ENCODE measurements at regions of chr17 and their contacts with region 1.

Region 1: GRCh38 chr17:60630352-60630751 is 30.4 kb downstream of the PPM1D start:
- DNase-seq: peak; percentile 32 to 63 (median 52)
- H3K4me3 ChIP-seq: no peak overlapping the region
- H3K27ac ChIP-seq: peak overlapping the region in 1 of 2 donors; percentile 34
- H3K4me1 ChIP-seq: peaks cover 6% of the 10 kb centered on the region
- H3K27me3 ChIP-seq: no peaks in the 10 kb centered on the region
- CTCF ChIP-seq: no peak
- EP300 ChIP-seq: no peak
- POLR2A ChIP-seq: no peak

Region 2: GRCh38 chr17:60577147-60577915 is 53.0 kb before region 1 on chr17:
- intact Hi-C with region 1: loop called in 3 of 4 experiments (anchors 10 kb)
- DNase-seq: peak in 3 of 5 donors; percentile 50 to 63 (median 53)
- H3K4me3 ChIP-seq: peak overlapping the region; percentile 32
- H3K27ac ChIP-seq: peak overlapping the region in 1 of 2 donors; percentile 63
- H3K4me1 ChIP-seq: peaks cover 13% of the 10 kb centered on the region
- H3K27me3 ChIP-seq: no peaks in the 10 kb centered on the region
- CTCF ChIP-seq: peak in 1 of 3 donors; percentile 18
- EP300 ChIP-seq: no peak
- POLR2A ChIP-seq: no peak

Region 3: DNA sequence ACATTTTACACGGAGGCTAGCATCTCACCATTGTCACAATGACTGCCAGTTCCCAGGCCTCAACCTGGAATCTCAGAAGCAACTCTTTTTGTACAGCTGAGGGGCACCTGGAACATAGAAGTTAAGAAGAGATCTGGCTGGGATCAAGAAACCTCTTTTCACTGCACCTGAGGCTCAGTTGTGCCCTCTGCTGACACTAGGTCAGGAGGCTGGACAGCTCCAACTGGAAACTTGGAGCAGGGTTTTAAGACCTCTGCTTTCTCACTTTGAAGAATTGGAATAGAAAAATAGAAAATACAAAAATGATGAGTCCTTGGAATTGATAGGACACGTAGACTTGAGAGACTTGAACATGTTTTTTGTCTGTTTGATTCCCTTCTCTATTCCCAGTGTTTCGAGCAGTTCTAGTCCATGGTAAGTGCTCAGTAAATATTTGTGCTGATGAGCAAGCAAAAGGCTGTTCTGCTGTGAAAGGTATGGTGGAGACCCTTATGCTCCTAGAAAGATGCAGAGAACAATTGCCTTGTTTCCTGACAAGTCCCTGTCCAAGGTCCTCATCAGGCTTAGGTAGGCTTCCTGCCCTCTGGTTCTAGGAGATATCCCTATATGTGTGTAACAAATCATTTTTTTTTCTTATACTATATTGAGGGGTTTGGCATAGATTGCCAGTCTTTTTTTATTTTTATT is 43.9 kb before region 1 on chr17:
- intact Hi-C with region 1: loop called in 1 of 4 experiments (anchors 10 kb)
- DNase-seq: no peak
- H3K4me3 ChIP-seq: no peak overlapping the region
- H3K27ac ChIP-seq: no peak overlapping the region
- H3K4me1 ChIP-seq: peaks cover 4% of the 10 kb centered on the region
- H3K27me3 ChIP-seq: no peaks in the 10 kb centered on the region
- CTCF ChIP-seq: no peak
- EP300 ChIP-seq: no peak
- POLR2A ChIP-seq: no peak

Measured in ovary (tissue), 10 donors.